ENCODE measurements at regions of chr16 and their contacts with region 1.

Region 1: DNA sequence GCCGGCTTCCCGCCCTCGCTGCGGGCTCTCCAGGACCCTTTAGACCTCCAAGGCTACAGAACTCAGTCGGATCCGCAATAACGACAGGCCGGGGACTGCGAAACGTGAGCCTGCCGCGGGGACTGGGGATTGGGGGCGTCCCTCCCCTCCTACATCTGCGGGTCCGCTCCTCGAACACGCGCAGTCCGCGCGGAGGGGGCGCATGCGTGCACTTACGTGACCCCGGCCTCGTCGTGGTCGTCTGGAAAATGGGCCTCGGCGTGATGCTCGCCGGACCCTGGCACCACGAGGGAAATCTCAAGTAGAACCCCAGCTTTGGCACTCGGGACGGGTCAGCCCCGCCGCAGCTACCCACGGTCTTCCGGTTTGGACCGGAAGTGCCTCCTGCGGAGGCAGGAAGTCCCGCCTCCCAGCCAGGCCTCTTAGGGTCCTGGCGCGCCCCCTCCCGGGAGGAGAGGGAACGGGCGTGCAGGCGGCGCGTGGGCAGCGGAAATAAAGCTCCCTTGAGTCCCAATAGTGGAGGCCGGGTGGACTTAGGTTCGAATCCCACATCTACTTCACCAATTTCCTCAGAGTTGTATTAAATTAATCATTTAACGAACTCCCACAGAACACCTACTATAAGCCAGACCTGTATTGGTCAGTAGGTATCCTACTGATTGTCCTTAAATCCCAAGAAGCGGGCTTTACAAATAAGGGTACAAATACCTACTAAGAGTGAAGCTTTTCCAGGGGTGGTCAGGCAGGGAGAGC is at the start of gene TAF1C:
- DNase-seq: peak; percentile 90 to 92
- H3K4me3 ChIP-seq: peak within 1 kb of the TSS; percentile 68 to 94 (median 90)
- H3K27ac ChIP-seq: peak within 1 kb of the TSS; percentile 73 to 81
- H3K4me1 ChIP-seq: peaks cover 0 to 5% of the 10 kb centered on the region in 2 donors
- H3K27me3 ChIP-seq: no peaks in the 10 kb centered on the region
- CTCF ChIP-seq: peak; percentile 67 to 95 (median 94)
- POLR2A ChIP-seq: no peak
- total RNA-seq, gene TAF1C: 29.5 to 52.7 (median 39.0) TPM

Region 2: GRCh38 chr16:84084570-84085270 is 102.1 kb before region 1 on chr16:
- intact Hi-C with region 1: loop called (anchors 10 kb)
- DNase-seq: peak; percentile 43 to 71
- H3K4me3 ChIP-seq: no peak overlapping the region
- H3K27ac ChIP-seq: no peak overlapping the region
- H3K4me1 ChIP-seq: no peaks in the 10 kb centered on the region
- H3K27me3 ChIP-seq: no peaks in the 10 kb centered on the region
- CTCF ChIP-seq: peak; percentile 25 to 65 (median 61)
- POLR2A ChIP-seq: no peak

Region 3: DNA sequence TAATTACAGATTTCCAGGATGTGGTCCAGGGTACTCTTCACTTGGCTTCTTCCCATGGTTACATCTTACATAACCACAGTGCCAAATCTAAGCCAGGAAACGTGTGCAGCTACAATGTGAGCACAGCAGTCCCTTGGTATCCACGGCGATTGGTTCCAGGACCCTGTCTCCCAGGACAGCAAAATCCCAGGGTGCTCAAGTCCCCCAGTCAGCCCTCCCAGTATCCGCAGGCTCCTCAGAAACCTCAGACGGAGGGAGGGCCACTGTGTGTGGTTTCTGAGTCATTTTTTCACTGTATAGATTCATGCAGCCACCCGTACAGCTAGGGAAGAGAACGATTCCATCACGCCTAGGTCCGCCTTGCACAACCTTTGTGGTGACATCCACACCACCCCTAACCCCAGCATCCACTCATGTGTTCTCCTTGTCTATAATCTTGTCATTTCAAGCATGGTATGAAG is 170.4 kb after region 1 on chr16:
- intact Hi-C with region 1: no loop called
- DNase-seq: no peak
- H3K4me3 ChIP-seq: no peak overlapping the region
- H3K27ac ChIP-seq: peak overlapping the region; percentile 61 to 71
- H3K4me1 ChIP-seq: peaks cover 0 to 5% of the 10 kb centered on the region in 2 donors
- H3K27me3 ChIP-seq: no peaks in the 10 kb centered on the region
- CTCF ChIP-seq: no peak
- POLR2A ChIP-seq: no peak

Measured in breast epithelium (tissue), 4 donors.